HepG2 (cell line): ENCODE measurements at regions of chr17 and their contacts with region 1.

Region 1: GRCh38 chr17:76547184-76547641 is 7.4 kb downstream of the PRCD start:
- DNase-seq: peak; percentile 74
- ATAC-seq: peak; percentile 73
- H3K4me3 ChIP-seq: peak overlapping the region in 1 of 3 experiments; percentile 66; a peak in 1 of 6 replicates
- H3K27ac ChIP-seq: no peak overlapping the region
- H3K4me1 ChIP-seq: peaks cover 62% of the 10 kb centered on the region
- H3K27me3 ChIP-seq: no peaks in the 10 kb centered on the region
- CTCF ChIP-seq: peak; percentile 95
- EP300 ChIP-seq: no peak
- POLR2A ChIP-seq: no peak
- RAD21 ChIP-seq: peak; percentile 97

Region 2: DNA sequence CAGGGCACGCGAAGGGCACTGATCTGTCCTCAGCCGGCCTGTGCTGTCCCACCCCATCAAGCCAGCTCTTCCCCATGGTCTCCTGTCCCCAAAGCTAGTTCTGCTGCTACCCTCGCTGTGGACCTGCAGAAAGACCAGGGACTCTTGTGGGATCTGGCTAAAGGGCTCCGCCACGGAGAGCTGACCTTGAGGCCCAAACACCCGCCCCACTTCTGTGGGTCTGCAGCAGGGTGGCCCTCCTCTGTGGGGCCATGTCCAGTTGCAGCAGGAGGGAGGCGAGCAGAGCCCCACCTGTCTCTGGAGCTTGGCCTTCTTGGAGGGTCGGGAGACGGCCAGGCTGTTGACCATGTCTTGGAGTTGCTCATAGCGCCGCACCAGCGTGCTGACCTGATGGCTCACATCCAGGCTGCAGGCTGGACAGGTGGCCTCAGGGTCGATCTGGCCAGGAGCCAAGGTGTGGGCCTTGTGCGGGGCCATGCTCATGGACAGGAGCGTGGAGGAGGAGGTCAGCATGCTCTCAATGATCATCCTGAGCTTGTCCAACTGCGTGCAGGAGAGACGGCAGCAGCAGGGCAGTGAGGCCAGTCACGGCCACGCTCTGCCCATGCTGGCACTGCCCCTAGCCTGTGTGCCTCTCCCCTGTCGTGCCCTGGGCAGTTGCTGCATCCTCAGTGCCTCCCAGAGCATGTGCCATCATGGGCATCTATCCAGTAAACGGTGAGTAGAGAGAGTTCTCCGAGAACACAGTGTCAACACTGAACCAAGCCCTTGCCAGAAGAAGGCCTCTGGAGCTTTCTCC is 265.4 kb before region 1 on chr17:
- CTCF ChIA-PET with region 1: no interaction called
- POLR2A ChIA-PET with region 1: no interaction called
- in situ Hi-C with region 1: no loop called
- intact Hi-C with region 1: no loop called
- DNase-seq: no peak
- ATAC-seq: peak; percentile 17; the same call in 2 of the 3 replicates
- H3K4me3 ChIP-seq: no peak overlapping the region
- H3K27ac ChIP-seq: no peak overlapping the region
- H3K4me1 ChIP-seq: peaks cover 25% of the 10 kb centered on the region
- H3K27me3 ChIP-seq: no peaks in the 10 kb centered on the region
- CTCF ChIP-seq: peak; percentile 16; the same call in 1 of the 2 replicates
- EP300 ChIP-seq: no peak
- POLR2A ChIP-seq: no peak
- RAD21 ChIP-seq: no peak

Region 3: DNA sequence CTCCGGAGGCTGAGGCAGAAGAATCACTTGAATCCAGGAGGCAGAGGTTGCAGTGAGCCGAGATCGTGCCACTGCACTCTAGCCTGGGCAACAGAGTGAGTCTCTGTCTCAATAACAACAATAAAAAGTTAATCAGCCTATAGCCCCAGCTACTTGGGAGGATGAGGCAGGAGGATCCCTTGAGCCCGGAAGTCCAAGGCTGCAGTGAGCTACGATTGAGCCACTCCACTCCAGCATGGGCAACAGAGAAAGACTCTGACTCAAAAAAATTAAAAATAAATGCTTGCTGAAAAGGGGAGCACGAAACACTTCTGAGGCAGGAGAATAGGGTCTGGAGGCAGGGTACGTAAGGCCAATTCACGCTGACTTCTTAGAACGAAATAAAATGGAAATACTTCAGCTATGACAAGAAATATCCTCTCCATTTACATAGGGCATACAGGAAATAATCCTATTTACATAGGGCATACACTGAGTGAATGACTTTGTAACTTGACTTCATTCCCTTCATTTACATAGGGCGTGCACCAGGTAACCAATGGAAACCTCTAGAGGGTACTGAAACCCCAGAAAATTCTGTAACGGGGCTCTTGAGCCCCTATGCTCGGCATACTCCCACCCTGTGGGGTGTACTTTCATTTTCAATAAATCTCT is 190.3 kb before region 1 on chr17:
- CTCF ChIA-PET with region 1: no interaction called
- POLR2A ChIA-PET with region 1: no interaction called
- in situ Hi-C with region 1: no loop called
- intact Hi-C with region 1: no loop called
- DNase-seq: peak; percentile 83
- ATAC-seq: peak; percentile 59
- H3K4me3 ChIP-seq: peak overlapping the region; percentile 21 to 57 (median 35)
- H3K27ac ChIP-seq: peak overlapping the region; percentile 80
- H3K4me1 ChIP-seq: peaks cover 68% of the 10 kb centered on the region
- H3K27me3 ChIP-seq: no peaks in the 10 kb centered on the region; a peak in 1 of 5 replicates
- CTCF ChIP-seq: no peak
- EP300 ChIP-seq: 0 out of 4 replicates have a peak, but pooled peaks of 1 of the 2 experiments have one; percentile 4
- POLR2A ChIP-seq: no peak
- RAD21 ChIP-seq: peak; percentile 5; the same call in 1 of the 2 replicates

Region 4: GRCh38 chr17:76397687-76398487 is 149.3 kb before region 1 on chr17:
- CTCF ChIA-PET with region 1: no interaction called
- POLR2A ChIA-PET with region 1: no interaction called
- in situ Hi-C with region 1: no loop called
- intact Hi-C with region 1: no loop called
- DNase-seq: peak; percentile 80
- ATAC-seq: peak; percentile 87
- H3K4me3 ChIP-seq: no peak overlapping the region
- H3K27ac ChIP-seq: no peak overlapping the region
- H3K4me1 ChIP-seq: no peaks in the 10 kb centered on the region
- H3K27me3 ChIP-seq: no peaks in the 10 kb centered on the region
- CTCF ChIP-seq: peak; percentile 99
- EP300 ChIP-seq: no peak
- POLR2A ChIP-seq: no peak
- RAD21 ChIP-seq: peak; percentile 96

Region 5: DNA sequence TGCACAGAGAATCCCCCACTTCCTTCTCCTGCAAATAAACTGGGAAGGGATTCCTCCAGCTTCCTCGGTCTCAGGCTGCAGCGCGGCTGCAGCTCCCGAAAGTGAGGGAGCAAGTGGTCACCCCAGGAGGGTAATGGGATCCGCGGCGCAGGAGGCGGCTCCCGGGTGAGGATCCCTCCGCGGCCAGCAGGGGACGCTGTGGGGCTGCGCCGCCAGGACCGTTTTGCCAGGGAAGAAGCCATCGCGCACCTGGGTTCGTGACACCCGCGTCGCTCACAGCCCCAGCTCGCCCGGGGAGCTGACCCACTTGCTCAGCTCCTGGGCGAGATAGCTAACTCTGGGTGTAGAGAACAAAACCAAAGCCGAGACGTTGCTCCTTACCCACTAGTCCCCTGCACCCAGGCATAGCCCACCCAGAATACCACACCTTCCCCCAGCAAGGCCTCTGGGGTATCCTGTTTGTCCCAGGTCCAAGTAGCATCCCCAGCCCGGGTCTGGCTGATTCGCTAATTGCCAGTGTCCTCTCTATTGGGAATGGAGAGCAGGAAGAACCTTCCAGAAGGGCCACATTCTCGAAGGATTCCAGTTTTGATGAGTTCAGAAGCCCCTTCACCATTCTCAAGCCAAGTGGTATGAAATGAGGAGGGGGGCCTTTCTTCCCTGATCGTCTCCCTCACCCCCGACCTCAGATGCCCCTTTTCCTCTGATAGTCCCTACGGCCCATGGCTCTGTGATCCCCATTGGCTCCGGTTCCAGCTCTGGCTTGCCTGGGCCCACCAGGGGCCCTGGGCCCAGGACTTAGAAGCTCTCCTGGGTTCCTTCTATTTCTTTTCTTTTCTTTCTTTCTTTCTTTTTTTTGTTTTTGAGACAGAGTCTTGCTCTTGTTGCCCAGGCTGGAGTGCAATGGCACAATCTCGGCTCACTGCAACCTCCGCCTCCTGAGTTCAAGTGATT is 23.9 kb before region 1 on chr17:
- CTCF ChIA-PET with region 1: interaction called, 86 read pairs
- POLR2A ChIA-PET with region 1: interaction called, 40 read pairs
- in situ Hi-C with region 1: no loop called
- intact Hi-C with region 1: loop called (anchors 1 kb)
- DNase-seq: peak; percentile 53
- ATAC-seq: peak; percentile 58
- H3K4me3 ChIP-seq: peak overlapping the region in 1 of 3 experiments; percentile 64; a peak in 2 of 6 replicates
- H3K27ac ChIP-seq: no peak overlapping the region
- H3K4me1 ChIP-seq: peaks cover 85% of the 10 kb centered on the region
- H3K27me3 ChIP-seq: peaks cover 8 to 32% of the 10 kb centered on the region in 2 experiments
- CTCF ChIP-seq: peak; percentile 100
- EP300 ChIP-seq: no peak; a peak in 1 of 4 replicates
- POLR2A ChIP-seq: no peak
- RAD21 ChIP-seq: peak; percentile 100

Region 6: DNA sequence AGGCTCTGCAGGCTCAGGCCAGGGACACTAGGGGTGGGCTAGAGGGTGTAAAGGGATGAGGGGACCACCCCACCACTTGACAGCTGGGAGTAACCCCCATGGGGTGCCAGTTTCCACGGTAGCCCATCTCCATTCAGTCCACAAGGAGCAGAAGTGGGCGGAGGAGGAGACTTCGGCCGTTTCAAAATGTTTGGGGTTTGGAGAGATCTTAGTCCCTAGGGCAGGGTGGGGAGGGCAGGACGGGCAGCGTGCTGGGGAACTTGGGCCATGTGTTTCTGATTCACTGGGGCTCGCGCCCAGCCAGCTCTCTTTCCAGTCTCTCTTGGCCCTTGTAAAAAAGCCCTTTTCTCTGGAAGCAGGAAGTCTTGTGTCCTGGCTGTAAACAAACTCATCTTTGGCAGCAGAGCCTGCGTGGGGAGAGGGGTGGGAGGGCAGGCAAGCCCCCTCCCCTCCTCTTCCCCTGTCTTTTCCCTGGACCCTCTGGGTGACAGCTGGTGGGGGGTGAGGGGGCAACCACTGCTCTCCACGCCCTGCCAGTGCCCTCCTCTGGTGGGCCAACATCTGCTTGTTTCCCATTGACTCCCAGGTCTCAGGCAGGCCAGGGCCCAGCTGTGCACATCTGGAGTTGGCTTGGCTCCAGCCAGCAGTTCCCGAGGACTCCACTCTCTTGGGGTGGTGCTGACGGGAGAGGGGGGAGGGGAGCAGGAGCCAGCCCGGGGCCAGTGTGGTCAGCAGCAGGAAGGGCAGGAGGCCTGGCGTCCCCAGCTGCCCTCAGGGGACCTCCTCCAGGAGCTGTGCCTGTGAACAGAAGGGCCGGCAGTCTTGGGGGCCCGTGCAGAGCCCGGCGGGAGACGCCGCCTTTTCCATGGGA is 17.8 kb before region 1 on chr17:
- CTCF ChIA-PET with region 1: interaction called, 8 read pairs
- POLR2A ChIA-PET with region 1: interaction called, 40 read pairs
- in situ Hi-C with region 1: no loop called
- intact Hi-C with region 1: no loop called
- DNase-seq: peak; percentile 61
- ATAC-seq: peak; percentile 13
- H3K4me3 ChIP-seq: peak overlapping the region in 1 of 3 experiments; percentile 35; a peak in 1 of 6 replicates
- H3K27ac ChIP-seq: peak overlapping the region; percentile 60
- H3K4me1 ChIP-seq: peaks cover 91% of the 10 kb centered on the region
- H3K27me3 ChIP-seq: no peaks in the 10 kb centered on the region
- CTCF ChIP-seq: peak; percentile 22; the same call in 1 of the 2 replicates
- EP300 ChIP-seq: peak; percentile 19; a peak in 1 of 4 replicates
- POLR2A ChIP-seq: no peak
- RAD21 ChIP-seq: no peak

Region 7: DNA sequence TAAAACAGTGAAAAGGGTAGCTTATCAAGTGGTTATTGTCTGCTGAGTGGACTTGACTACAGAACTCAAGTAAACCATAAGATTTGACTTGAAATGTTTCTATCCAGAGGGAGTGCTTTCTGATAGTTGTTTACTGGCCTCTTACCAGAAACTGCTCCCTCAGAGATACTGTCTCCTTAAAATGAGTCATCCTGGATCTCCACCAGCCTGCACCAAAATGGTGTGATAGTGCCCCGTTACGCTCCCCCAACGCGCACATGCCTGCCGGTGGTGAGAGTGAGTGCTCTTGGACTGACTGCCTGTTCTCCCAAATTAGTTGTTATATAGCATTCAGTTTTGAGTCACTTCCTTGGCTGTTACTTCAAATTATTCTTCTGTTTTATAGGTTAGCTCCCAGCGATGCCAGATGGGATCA is 15.5 kb after region 1 on chr17:
- CTCF ChIA-PET with region 1: no interaction called
- POLR2A ChIA-PET with region 1: interaction called, 17 read pairs
- in situ Hi-C with region 1: no loop called
- intact Hi-C with region 1: no loop called
- DNase-seq: no peak
- ATAC-seq: no peak
- H3K4me3 ChIP-seq: no peak overlapping the region
- H3K27ac ChIP-seq: no peak overlapping the region
- H3K4me1 ChIP-seq: peaks cover 62% of the 10 kb centered on the region
- H3K27me3 ChIP-seq: no peaks in the 10 kb centered on the region; a peak in 1 of 5 replicates
- CTCF ChIP-seq: no peak
- EP300 ChIP-seq: no peak
- POLR2A ChIP-seq: no peak
- RAD21 ChIP-seq: no peak

Region 8: GRCh38 chr17:76585818-76586593 is 38.8 kb after region 1 on chr17 and contains the start of gene ST6GALNAC2:
- CTCF ChIA-PET with region 1: interaction called, 5 read pairs
- POLR2A ChIA-PET with region 1: interaction called, 4 read pairs
- in situ Hi-C with region 1: no loop called
- intact Hi-C with region 1: loop called (anchors 5 kb)
- DNase-seq: peak; percentile 66
- ATAC-seq: peak; percentile 93
- H3K4me3 ChIP-seq: peak within 1 kb of the TSS; percentile 55 to 72 (median 58)
- H3K27ac ChIP-seq: no peak within 1 kb of the TSS
- H3K4me1 ChIP-seq: peaks cover 53% of the 10 kb centered on the region
- H3K27me3 ChIP-seq: peaks cover 11 to 40% of the 10 kb centered on the region in 2 experiments; a peak in 4 of 5 replicates
- CTCF ChIP-seq: peak; percentile 90
- EP300 ChIP-seq: no peak
- POLR2A ChIP-seq: no peak
- RAD21 ChIP-seq: peak; percentile 98
- total RNA-seq, gene ST6GALNAC2: 0.49 and 0.84 TPM in 2 replicates

Region 9: DNA sequence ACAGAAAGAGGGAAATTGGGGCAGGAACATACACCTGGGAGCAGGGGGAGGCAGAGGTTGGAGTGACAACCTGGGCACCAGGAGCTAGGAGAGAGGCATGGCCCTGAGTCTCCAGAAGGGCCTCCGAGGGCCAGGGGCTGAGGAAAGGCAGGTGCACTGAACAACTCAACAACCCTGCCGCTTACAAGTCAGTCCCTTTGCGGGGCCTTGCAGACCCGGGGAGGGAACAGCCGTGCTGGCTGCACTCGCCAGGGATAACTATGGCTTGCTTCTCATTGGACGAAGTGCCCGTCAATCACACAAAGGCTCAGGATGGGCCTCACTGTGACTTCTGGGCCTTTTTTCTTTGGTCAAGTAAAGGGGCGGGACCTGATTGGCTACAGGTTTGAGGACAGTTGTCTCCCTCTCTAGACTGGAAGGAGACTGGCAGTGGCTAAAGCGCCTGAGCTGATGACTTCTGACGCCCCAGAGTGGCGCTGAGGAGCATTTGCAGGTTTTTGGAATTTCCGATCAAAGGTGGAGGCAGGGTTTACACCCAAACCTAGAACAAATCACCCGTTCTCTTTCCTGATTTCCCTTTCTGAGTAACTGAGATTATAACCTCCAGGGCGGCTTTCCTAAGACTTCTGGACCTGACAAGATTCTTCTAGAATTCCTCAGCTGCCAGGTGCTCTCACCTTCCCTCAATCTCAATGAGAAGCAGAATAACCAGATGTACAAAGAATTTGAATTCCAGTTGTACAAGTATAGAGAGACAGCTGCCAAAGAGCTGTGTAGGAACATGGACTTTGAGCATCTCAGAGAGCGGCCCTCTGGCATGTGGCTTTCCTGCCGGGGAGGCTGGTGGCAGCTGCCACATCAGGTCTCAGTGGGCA is 66.0 kb after region 1 on chr17:
- CTCF ChIA-PET with region 1: no interaction called
- POLR2A ChIA-PET with region 1: interaction called, 10 read pairs
- in situ Hi-C with region 1: no loop called
- intact Hi-C with region 1: no loop called
- DNase-seq: peak; percentile 94
- ATAC-seq: peak; percentile 95
- H3K4me3 ChIP-seq: peak overlapping the region; percentile 17 to 70 (median 32)
- H3K27ac ChIP-seq: peak overlapping the region; percentile 57
- H3K4me1 ChIP-seq: peaks cover 34% of the 10 kb centered on the region
- H3K27me3 ChIP-seq: peaks cover 0 to 6% of the 10 kb centered on the region in 2 experiments; a peak in 1 of 5 replicates
- CTCF ChIP-seq: peak; percentile 71
- EP300 ChIP-seq: no peak
- POLR2A ChIP-seq: no peak
- RAD21 ChIP-seq: peak; percentile 57